Right cardiac atrium (tissue), 5 donors: ENCODE measurements at regions of chrX and their contacts with region 1.

Region 1: GRCh38 chrX:106898462-106898861 is 4.7 kb downstream of the RIPPLY1 start:
- DNase-seq: no peak
- ATAC-seq: peak in 1 of 2 donors; percentile 40
- H3K4me3 ChIP-seq: no peak overlapping the region
- H3K27ac ChIP-seq: no peak overlapping the region
- H3K4me1 ChIP-seq: peaks cover 3% of the 10 kb centered on the region
- H3K27me3 ChIP-seq: no peaks in the 10 kb centered on the region

Region 2: DNA sequence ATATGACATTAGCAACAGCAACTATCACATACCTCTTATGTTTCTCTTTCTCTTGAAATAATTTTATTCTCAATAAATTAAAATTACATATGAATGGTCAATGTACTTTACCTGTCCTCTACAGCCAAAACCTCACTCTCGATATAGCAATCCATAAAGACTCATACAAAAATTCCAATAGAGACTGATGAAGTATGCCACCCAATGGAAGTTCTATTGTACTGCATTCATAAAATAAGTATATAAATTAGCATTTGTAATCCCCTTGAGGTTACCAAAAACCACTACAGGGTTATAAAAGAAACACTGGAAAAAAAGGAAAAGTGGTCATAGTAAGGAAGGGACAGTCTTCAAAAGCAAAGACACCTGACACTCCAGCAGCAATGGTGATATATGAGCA is 54.5 kb after region 1 on chrX:
- intact Hi-C with region 1: loop called in 1 of 4 experiments (anchors 5 kb)
- DNase-seq: no peak
- ATAC-seq: no peak
- H3K4me3 ChIP-seq: no peak overlapping the region
- H3K27ac ChIP-seq: no peak overlapping the region
- H3K4me1 ChIP-seq: no peaks in the 10 kb centered on the region
- H3K27me3 ChIP-seq: no peaks in the 10 kb centered on the region